ENCODE measurements at regions of chr1 and their contacts with region 1.

Region 1: DNA sequence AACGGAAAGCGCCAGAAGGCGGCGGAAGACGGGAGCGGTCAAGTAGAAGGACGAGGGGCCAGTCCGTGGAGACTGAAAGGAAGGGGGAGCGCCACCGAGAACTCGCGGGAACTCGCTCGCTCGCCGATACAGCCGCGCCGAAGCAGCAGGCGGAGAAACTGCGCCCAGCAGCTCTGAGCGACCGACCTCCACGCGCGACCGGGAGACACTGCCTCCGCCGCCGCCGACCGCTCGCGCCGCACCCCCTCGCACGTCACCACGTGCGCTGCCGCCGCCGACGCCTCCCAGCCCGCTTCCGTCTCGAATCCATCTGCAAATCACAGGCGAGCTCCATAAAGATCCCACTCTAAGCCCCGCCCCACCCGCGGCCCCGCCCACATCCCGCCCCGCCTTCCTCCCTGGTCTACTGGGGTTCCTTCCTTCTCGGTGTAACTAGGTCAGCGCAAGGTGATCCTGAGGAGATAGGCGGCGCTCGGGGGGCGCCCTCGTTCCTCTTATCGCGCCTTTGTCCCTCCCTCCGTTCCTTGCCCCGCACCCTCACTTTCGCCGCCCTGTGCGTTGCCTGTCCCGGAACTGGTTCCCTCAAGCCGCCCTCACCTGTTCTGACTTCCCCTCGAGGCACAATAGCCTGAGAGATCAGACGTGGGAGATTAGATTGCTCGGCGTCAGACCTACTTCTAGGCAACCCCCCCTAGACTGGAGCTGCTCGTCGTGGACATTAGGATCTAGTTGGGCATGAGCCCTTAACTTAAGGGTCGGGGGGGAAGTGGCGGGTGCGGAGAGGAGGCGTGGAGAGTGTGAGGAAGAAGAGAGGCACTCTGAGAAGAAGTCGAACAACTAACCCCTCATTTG is at the start of gene IVNS1ABP:
- DNase-seq: peak; percentile 90 to 99 (median 95)
- ATAC-seq: peak; percentile 74 to 81 (median 76)
- H3K4me3 ChIP-seq: peak within 1 kb of the TSS; percentile 95 to 99
- H3K4me3 Mint-ChIP-seq: peak within 1 kb of the TSS; percentile 95 to 96 (median 95)
- H3K27ac ChIP-seq: peak within 1 kb of the TSS; percentile 98
- H3K27ac Mint-ChIP-seq: peak within 1 kb of the TSS; percentile 98
- H3K4me1 ChIP-seq: peaks cover 8 to 28% of the 10 kb centered on the region in 2 experiments
- H3K4me1 Mint-ChIP-seq: peaks cover 48 to 55% (median 53%) of the 10 kb centered on the region in 3 donors
- H3K27me3 ChIP-seq: no peaks in the 10 kb centered on the region
- H3K27me3 Mint-ChIP-seq: no peaks in the 10 kb centered on the region
- total RNA-seq, gene IVNS1ABP: 125 to 292 (median 136) TPM

Region 2: GRCh38 chr1:185156854-185157598 is 160.2 kb before region 1 on chr1 and contains the starts of genes SWT1 and TRMT1L:
- CTCF ChIA-PET with region 1: no interaction called
- POLR2A ChIA-PET with region 1: interaction called, 5 to 15 read pairs
- DNase-seq: peak; percentile 95 to 99 (median 97)
- ATAC-seq: peak; percentile 91 to 94 (median 91)
- H3K4me3 ChIP-seq: peak within 1 kb of the TSS; percentile 97 to 99
- H3K4me3 Mint-ChIP-seq: peak within 1 kb of the TSS; percentile 98 to 100 (median 98)
- H3K27ac ChIP-seq: peak within 1 kb of the TSS; percentile 99
- H3K27ac Mint-ChIP-seq: peak within 1 kb of the TSS; percentile 97 to 99
- H3K4me1 ChIP-seq: peaks cover 11 to 25% of the 10 kb centered on the region in 2 experiments
- H3K4me1 Mint-ChIP-seq: peaks cover 50 to 53% (median 53%) of the 10 kb centered on the region in 3 donors
- H3K27me3 ChIP-seq: no peaks in the 10 kb centered on the region
- H3K27me3 Mint-ChIP-seq: no peaks in the 10 kb centered on the region
- total RNA-seq, gene SWT1: 6.4 to 9.8 (median 8.5) TPM
- total RNA-seq, gene TRMT1L: 6.2 to 23.4 (median 22.1) TPM

Region 3: DNA sequence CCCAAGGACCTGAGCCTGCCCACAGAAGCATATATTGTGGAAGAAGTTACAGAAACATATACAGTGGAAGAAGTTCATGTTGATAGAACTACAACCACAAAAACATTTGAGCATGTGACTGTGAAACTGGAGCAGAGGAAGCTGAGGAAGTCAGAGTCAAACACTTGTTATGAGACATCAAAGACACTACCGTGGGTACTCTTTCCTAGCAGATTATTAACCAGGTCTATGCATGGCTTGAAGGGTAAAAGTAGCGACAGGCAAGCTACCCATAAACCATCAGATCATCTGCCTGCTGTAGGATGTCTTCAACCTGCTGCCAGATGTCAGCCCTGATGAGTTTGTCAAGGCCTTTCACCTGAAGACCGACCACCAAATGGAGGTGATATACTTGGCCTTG is 36.0 kb before region 1 on chr1:
- CTCF ChIA-PET with region 1: interaction called in 1 of 2 experiments, 3 read pairs
- POLR2A ChIA-PET with region 1: interaction called in 1 of 2 experiments, 13 read pairs
- DNase-seq: peak in 31 of 35 experiments; percentile 9 to 70 (median 25)
- ATAC-seq: peak; percentile 93 to 97 (median 96)
- H3K4me3 ChIP-seq: no peak overlapping the region
- H3K4me3 Mint-ChIP-seq: peak overlapping the region; percentile 62 to 80 (median 68)
- H3K27ac ChIP-seq: peak overlapping the region; percentile 75
- H3K27ac Mint-ChIP-seq: peak overlapping the region; percentile 99 to 100
- H3K4me1 ChIP-seq: peaks cover 32 to 38% of the 10 kb centered on the region in 2 experiments
- H3K4me1 Mint-ChIP-seq: peaks cover 68 to 69% (median 68%) of the 10 kb centered on the region in 3 donors
- H3K27me3 ChIP-seq: no peaks in the 10 kb centered on the region
- H3K27me3 Mint-ChIP-seq: no peaks in the 10 kb centered on the region

Region 4: GRCh38 chr1:185305419-185305818 is 11.8 kb before region 1 on chr1:
- CTCF ChIA-PET with region 1: interaction called in 1 of 2 experiments, 4 read pairs
- POLR2A ChIA-PET with region 1: interaction called, 5 to 32 read pairs
- DNase-seq: no peak
- ATAC-seq: no peak
- H3K4me3 ChIP-seq: no peak overlapping the region
- H3K4me3 Mint-ChIP-seq: no peak overlapping the region
- H3K27ac ChIP-seq: no peak overlapping the region
- H3K27ac Mint-ChIP-seq: no peak overlapping the region
- H3K4me1 ChIP-seq: peaks cover 0 to 4% of the 10 kb centered on the region in 2 experiments
- H3K4me1 Mint-ChIP-seq: peaks cover 10 to 16% (median 15%) of the 10 kb centered on the region in 3 donors
- H3K27me3 ChIP-seq: no peaks in the 10 kb centered on the region
- H3K27me3 Mint-ChIP-seq: no peaks in the 10 kb centered on the region

Region 5: DNA sequence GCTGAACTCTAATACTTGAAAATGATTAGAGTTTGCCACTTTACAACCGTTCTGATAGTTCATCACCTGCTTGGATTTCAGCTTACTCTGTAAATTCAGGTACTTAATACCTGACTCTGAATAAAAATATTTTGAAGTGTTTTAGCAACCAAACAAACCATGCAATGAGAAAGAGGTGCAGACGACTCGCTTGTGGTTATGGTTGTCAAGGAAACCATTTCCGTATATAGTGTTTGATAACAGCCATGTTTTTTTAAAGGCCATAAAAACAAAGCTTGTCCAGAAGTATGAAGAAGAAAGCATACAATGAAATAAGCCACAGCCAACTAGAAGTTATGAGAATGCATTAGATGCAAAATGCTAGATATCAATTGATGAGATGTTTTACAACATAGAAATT is 249.7 kb after region 1 on chr1:
- CTCF ChIA-PET with region 1: interaction called in 1 of 2 experiments, 37 read pairs
- POLR2A ChIA-PET with region 1: interaction called, 9 to 102 read pairs
- DNase-seq: peak in 33 of 35 experiments; percentile 8 to 94 (median 52)
- ATAC-seq: peak; percentile 89 to 91 (median 89)
- H3K4me3 ChIP-seq: peak overlapping the region in 1 of 2 donors; percentile 18
- H3K4me3 Mint-ChIP-seq: peak overlapping the region; percentile 55 to 67 (median 62)
- H3K27ac ChIP-seq: peak overlapping the region; percentile 93
- H3K27ac Mint-ChIP-seq: peak overlapping the region; percentile 97 to 98
- H3K4me1 ChIP-seq: peaks cover 34 to 57% of the 10 kb centered on the region in 2 experiments
- H3K4me1 Mint-ChIP-seq: peaks cover 81 to 92% (median 91%) of the 10 kb centered on the region in 3 donors
- H3K27me3 ChIP-seq: no peaks in the 10 kb centered on the region
- H3K27me3 Mint-ChIP-seq: no peaks in the 10 kb centered on the region

Region 6: DNA sequence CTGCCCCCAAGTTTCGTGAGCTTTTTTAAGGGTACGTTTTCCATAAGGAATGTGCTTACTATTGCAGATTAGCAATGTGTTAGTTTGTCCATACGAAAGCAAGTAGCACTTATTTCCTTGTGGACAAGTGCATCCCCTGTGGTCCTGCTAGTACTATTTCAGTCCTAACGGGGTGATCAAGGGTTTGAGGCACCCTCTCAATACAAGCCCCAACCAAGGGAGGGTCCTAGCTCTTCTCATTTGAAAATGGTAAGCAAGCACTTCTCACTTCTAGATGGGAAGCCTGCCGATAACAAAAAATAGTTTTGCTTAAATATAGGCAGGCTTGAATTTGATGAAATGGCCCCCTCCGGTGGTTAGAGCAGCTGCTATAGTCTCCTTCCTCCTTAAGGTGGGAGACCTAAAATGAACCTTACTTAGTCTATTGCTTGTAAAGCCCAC is 352.9 kb after region 1 on chr1:
- CTCF ChIA-PET with region 1: interaction called, 9 to 12 read pairs
- POLR2A ChIA-PET with region 1: interaction called in 1 of 2 experiments, 6 read pairs
- DNase-seq: peak; percentile 19 to 76 (median 56)
- ATAC-seq: peak; percentile 66 to 84 (median 75)
- H3K4me3 ChIP-seq: no peak overlapping the region
- H3K4me3 Mint-ChIP-seq: no peak overlapping the region
- H3K27ac ChIP-seq: peak overlapping the region; percentile 15
- H3K27ac Mint-ChIP-seq: peak overlapping the region; percentile 40 to 50
- H3K4me1 ChIP-seq: peaks cover 11 to 17% of the 10 kb centered on the region in 2 experiments
- H3K4me1 Mint-ChIP-seq: peaks cover 32 to 34% (median 34%) of the 10 kb centered on the region in 3 donors
- H3K27me3 ChIP-seq: no peaks in the 10 kb centered on the region
- H3K27me3 Mint-ChIP-seq: no peaks in the 10 kb centered on the region